CD4-positive, alpha-beta memory T cell (primary cell): ENCODE measurements at regions of chr18 and their contacts with region 1.

Region 1: GRCh38 chr18:50287441-50288347 is at the start of gene CXXC1:
- DNase-seq: peak; percentile 96 to 99 (median 98)
- H3K4me3 ChIP-seq: peak within 1 kb of the TSS; percentile 82 to 88
- H3K4me3 Mint-ChIP-seq: peak within 1 kb of the TSS; percentile 96 to 100 (median 99)
- H3K27ac ChIP-seq: peak within 1 kb of the TSS; percentile 82
- H3K27ac Mint-ChIP-seq: peak within 1 kb of the TSS; percentile 91 to 100 (median 100)
- H3K4me1 ChIP-seq: peaks cover 14% of the 10 kb centered on the region
- H3K4me1 Mint-ChIP-seq: peaks cover 19 to 44% (median 28%) of the 10 kb centered on the region in 4 donors
- H3K27me3 ChIP-seq: no peaks in the 10 kb centered on the region
- H3K27me3 Mint-ChIP-seq: no peaks in the 10 kb centered on the region
- total RNA-seq, gene CXXC1: 165 to 191 TPM

Region 2: GRCh38 chr18:49459404-49460171 is 828.1 kb before region 1 on chr18:
- CTCF ChIA-PET with region 1: no interaction called
- POLR2A ChIA-PET with region 1: no interaction called
- intact Hi-C with region 1: loop called (anchors 1 kb)
- DNase-seq: peak in 4 of 5 donors; percentile 16 to 53 (median 26)
- H3K4me3 ChIP-seq: peak overlapping the region; percentile 43 to 89
- H3K4me3 Mint-ChIP-seq: peak overlapping the region; percentile 86 to 95 (median 91)
- H3K27ac ChIP-seq: peak overlapping the region; percentile 85
- H3K27ac Mint-ChIP-seq: peak overlapping the region; percentile 67 to 93 (median 90)
- H3K4me1 ChIP-seq: peaks cover 45% of the 10 kb centered on the region
- H3K4me1 Mint-ChIP-seq: peaks cover 34 to 61% (median 44%) of the 10 kb centered on the region in 4 donors
- H3K27me3 ChIP-seq: no peaks in the 10 kb centered on the region
- H3K27me3 Mint-ChIP-seq: no peaks in the 10 kb centered on the region

Region 3: GRCh38 chr18:50266248-50266704 is 21.4 kb before region 1 on chr18 and contains the start of gene CFAP53:
- CTCF ChIA-PET with region 1: interaction called, 16 read pairs
- POLR2A ChIA-PET with region 1: interaction called, 68 read pairs
- intact Hi-C with region 1: loop called (anchors 1 kb)
- DNase-seq: peak; percentile 73 to 83 (median 77)
- H3K4me3 ChIP-seq: peak within 1 kb of the TSS; percentile 58 to 63
- H3K4me3 Mint-ChIP-seq: peak within 1 kb of the TSS; percentile 83 to 97 (median 90)
- H3K27ac ChIP-seq: peak within 1 kb of the TSS; percentile 49
- H3K27ac Mint-ChIP-seq: peak within 1 kb of the TSS; percentile 81 to 93 (median 90)
- H3K4me1 ChIP-seq: peaks cover 15% of the 10 kb centered on the region
- H3K4me1 Mint-ChIP-seq: peaks cover 11 to 23% (median 18%) of the 10 kb centered on the region in 4 donors
- H3K27me3 ChIP-seq: no peaks in the 10 kb centered on the region
- H3K27me3 Mint-ChIP-seq: no peaks in the 10 kb centered on the region
- total RNA-seq, gene CFAP53: 1.4 to 1.6 TPM

Region 4: DNA sequence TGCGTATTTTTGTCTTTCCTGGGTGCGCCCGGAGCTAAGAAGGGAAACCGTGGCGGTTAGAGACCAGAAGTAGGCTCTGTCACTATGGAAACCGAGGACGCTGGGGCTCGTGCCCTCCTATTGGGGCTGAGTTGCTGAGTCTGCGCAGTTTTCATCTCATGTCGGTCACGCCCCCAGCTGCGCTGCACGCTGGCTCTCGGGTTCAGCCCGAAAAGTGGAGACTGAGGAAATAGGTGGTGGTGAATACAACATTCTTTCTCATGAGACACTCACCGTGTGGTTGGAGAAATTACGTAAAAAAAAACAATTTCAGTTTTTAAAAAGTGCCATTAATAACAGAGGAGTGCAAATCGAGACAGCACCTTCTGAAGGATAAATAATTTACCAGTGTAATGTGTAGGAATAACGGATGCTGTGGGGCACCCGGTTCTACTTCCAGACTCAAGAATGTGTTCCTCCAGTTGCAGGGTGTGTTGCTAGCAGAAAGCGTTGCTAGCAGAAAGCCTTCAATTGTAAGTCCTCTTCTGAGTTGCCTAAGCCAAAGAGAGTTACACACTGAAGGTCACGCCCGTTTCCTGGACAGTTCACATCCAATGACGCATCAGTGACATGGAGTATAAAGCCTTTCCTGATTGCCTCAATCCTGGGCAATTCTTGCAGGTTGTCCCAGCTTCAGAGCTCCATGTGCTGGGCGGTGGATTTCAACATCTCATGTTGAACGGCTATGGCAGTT is 20.2 kb after region 1 on chr18:
- CTCF ChIA-PET with region 1: interaction called, 3 read pairs
- POLR2A ChIA-PET with region 1: interaction called, 29 read pairs
- intact Hi-C with region 1: loop called (anchors 1 kb)
- DNase-seq: peak; percentile 85 to 93 (median 89)
- H3K4me3 ChIP-seq: peak overlapping the region; percentile 53 to 55
- H3K4me3 Mint-ChIP-seq: peak overlapping the region; percentile 91 to 97 (median 94)
- H3K27ac ChIP-seq: peak overlapping the region; percentile 7
- H3K27ac Mint-ChIP-seq: peak overlapping the region; percentile 61 to 94 (median 89)
- H3K4me1 ChIP-seq: peaks cover 15% of the 10 kb centered on the region
- H3K4me1 Mint-ChIP-seq: peaks cover 8 to 21% (median 14%) of the 10 kb centered on the region in 4 donors
- H3K27me3 ChIP-seq: no peaks in the 10 kb centered on the region
- H3K27me3 Mint-ChIP-seq: peaks cover 8 to 20% of the 10 kb centered on the region in 2 donors